Heart right ventricle (tissue), 16 donors: ENCODE measurements at regions of chr1 and their contacts with region 1.

Region 1: DNA sequence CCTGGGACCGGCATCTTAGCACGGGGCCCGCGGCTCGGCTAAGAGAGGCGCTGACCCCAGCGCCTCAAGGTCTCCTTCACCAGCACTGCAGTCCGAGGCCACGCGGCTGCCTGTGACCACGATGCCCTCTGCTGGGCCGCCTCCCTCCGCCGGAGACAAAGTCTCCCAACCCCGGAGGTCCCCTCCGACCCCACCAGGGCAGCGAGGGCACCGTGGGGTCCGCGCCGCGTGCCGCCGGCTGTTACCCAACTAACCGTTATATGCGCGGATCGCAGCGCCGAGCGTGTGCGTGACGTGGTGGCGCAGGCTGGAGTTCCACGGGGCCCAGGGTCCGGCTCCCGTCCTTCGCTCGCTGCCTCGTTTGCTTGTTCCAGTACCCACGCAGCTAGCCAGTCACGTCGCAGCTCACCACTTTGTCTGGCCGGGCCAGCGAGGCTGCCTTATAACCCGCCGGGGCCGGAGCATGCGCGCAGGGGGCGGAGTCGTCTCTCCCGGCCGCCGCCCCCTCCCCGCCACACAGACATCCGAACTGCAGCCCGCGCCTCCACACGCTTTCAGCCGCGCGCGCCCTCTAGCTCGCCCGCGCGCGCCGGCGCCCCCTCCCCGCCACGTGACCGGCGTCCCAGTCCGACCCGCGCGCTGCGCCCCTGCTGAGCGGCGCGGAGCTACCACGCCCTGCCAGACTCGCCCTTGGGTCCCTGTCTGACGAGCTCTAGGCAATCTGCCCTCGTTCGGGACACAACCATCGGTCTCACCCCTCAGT is at the start of gene SLC16A1:
- DNase-seq: peak; percentile 92 to 95
- ATAC-seq: peak; percentile 93 to 97 (median 94)
- H3K4me3 ChIP-seq: peak within 1 kb of the TSS; percentile 34 to 94 (median 77)
- H3K27ac ChIP-seq: peak within 1 kb of the TSS; percentile 85 to 96 (median 94)
- H3K4me1 ChIP-seq: peaks cover 0 to 62% (median 51%) of the 10 kb centered on the region in 9 donors
- H3K27me3 ChIP-seq: no peaks in the 10 kb centered on the region
- CTCF ChIP-seq: peak in 8 of 9 donors; percentile 8 to 59 (median 49)
- total RNA-seq, gene SLC16A1: 129 to 193 (median 152) TPM

Region 2: GRCh38 chr1:112715264-112716053 is 240.5 kb before region 1 on chr1 and contains the start of gene PPM1J:
- intact Hi-C with region 1: loop called in 3 of 10 experiments (anchors 5 to 10 kb)
- DNase-seq: peak; percentile 98 to 99
- ATAC-seq: peak; percentile 87 to 96 (median 91)
- H3K4me3 ChIP-seq: peak within 1 kb of the TSS; percentile 55 to 81 (median 71)
- H3K27ac ChIP-seq: peak within 1 kb of the TSS in 9 of 10 donors; percentile 67 to 88 (median 78)
- H3K4me1 ChIP-seq: peaks cover 2 to 35% (median 23%) of the 10 kb centered on the region in 9 donors
- H3K27me3 ChIP-seq: peaks cover 0 to 30% (median 12%) of the 10 kb centered on the region in 7 donors
- CTCF ChIP-seq: peak in 1 of 9 donors; percentile 2
- total RNA-seq, gene PPM1J: 5.8 to 11.0 (median 8.5) TPM

Region 3: DNA sequence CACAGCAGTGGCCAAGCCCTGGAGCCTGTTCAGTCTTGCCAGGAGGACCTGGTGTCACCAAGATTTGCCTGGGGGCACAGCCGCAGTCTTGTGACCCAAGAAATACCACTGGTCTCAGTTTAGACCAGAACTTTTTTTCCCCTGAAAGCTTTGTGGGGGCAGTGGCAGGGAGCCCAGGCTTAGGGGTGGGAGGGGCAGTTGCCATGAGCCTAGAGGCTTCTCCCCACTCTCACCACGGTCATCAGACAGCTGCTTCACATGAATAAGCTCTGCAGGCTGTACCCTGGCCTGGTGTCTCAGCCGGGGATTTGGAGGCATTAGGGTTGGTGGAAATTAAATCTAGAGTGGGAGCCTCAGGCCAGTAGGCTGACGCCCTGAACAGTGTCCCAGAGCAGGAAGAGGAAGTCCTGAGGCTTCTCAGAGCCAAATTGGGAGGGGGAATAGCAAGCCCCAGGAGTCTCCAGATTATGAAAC is 73.7 kb before region 1 on chr1:
- intact Hi-C with region 1: loop called in 6 of 10 experiments (anchors 1 to 5 kb)
- DNase-seq: no peak
- ATAC-seq: peak; percentile 6 to 85 (median 46)
- H3K4me3 ChIP-seq: no peak overlapping the region
- H3K27ac ChIP-seq: peak overlapping the region in 8 of 10 donors; percentile 10 to 76 (median 65)
- H3K4me1 ChIP-seq: peaks cover 0 to 23% (median 17%) of the 10 kb centered on the region in 9 donors
- H3K27me3 ChIP-seq: no peaks in the 10 kb centered on the region
- CTCF ChIP-seq: no peak

Region 4: DNA sequence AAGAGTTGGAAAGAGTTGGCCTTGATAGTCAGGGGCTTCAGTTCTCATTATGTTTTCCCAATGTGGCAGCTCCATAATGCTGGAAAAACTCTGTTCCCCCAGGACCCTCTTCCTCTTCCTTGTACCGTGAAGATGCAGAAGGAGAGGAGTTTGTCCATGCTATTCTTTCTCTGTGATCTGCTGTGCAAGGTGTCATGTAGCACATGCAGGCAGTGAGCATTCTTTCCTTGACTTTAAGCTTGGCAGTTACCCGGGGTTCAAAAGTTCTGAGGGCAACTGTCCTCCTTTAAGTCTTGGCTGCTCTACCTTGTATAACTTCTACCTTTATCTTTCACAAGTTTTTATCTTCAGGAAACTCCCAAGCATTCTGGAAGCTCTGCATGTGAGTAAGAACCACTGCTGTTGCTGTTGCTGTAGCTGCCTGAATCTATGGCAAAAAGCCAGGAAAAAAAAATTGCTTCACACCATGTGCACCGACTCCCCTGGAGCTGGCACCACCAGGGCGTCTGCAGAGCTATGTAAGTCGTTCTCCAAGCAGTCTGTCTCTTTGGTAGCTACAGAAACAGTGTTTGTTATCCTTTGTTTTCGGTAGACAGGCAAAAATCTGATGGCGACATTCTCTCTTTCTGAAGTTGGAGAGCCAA is 42.8 kb after region 1 on chr1:
- intact Hi-C with region 1: loop called in 3 of 10 experiments (anchors 5 to 10 kb)
- DNase-seq: peak; percentile 51 to 52
- ATAC-seq: peak; percentile 69 to 88 (median 83)
- H3K4me3 ChIP-seq: no peak overlapping the region
- H3K27ac ChIP-seq: peak overlapping the region; percentile 47 to 93 (median 80)
- H3K4me1 ChIP-seq: peaks cover 6 to 53% (median 16%) of the 10 kb centered on the region in 9 donors
- H3K27me3 ChIP-seq: no peaks in the 10 kb centered on the region
- CTCF ChIP-seq: no peak

Region 5: GRCh38 chr1:113021430-113022086 is 65.6 kb after region 1 on chr1:
- intact Hi-C with region 1: loop called in 5 of 10 experiments (anchors 10 kb)
- DNase-seq: no peak
- ATAC-seq: peak in 4 of 8 donors; percentile 30 to 60 (median 52)
- H3K4me3 ChIP-seq: no peak overlapping the region
- H3K27ac ChIP-seq: peak overlapping the region in 4 of 10 donors; percentile 1 to 35 (median 28)
- H3K4me1 ChIP-seq: peaks cover 0 to 7% (median 0%) of the 10 kb centered on the region in 9 donors
- H3K27me3 ChIP-seq: no peaks in the 10 kb centered on the region
- CTCF ChIP-seq: no peak

Region 6: DNA sequence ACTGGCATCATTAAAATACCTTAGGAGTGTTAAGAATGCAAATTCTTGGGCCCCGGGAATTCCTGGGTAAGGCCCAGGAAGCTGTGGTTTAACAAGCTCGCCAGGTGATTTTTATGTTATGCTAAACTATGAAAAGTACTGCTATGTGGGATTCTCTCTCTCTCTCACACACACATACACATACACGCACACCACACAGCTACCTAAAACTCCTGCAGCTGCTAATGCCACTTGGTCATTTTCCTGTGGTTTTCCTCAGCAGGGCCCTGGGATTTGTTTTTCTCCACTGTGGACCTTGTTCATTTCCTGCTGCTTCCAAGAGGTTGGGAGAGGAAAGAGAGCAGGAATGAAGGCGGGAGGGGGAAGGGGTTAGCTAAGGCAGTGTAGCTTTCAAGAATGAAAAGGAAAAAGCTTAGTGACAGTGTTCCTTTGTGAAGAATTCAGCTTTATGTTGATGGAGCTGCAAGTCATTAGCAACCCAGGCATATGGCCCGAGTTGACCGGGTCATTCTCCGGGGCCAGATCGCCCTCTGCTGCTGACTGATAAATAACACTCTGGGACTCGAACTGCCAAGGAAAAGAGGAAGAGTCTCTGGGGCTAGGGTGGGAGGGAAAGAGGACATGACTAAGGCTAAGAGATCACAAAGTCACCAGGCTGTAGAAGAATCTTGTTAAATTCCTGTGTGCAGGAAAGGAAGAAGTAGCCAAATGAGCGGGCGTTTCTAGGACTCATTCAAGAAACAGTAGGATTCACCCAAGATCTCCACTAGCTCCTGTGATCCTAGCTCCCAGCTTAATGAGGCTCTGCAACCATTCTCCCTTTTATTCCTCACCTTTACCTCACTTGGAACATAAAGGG is 86.6 kb after region 1 on chr1:
- intact Hi-C with region 1: loop called in 5 of 10 experiments (anchors 5 to 10 kb)
- DNase-seq: peak; percentile 62 to 75
- ATAC-seq: peak; percentile 76 to 94 (median 92)
- H3K4me3 ChIP-seq: no peak overlapping the region
- H3K27ac ChIP-seq: peak overlapping the region in 2 of 10 donors; percentile 3 to 31
- H3K4me1 ChIP-seq: peaks cover 0 to 39% (median 13%) of the 10 kb centered on the region in 9 donors
- H3K27me3 ChIP-seq: no peaks in the 10 kb centered on the region
- CTCF ChIP-seq: peak; percentile 29 to 77 (median 62)

Region 7: GRCh38 chr1:113133038-113133437 is 177.1 kb after region 1 on chr1:
- intact Hi-C with region 1: no loop called
- DNase-seq: no peak
- ATAC-seq: no peak
- H3K4me3 ChIP-seq: no peak overlapping the region
- H3K27ac ChIP-seq: no peak overlapping the region
- H3K4me1 ChIP-seq: peaks cover 0 to 8% (median 0%) of the 10 kb centered on the region in 9 donors
- H3K27me3 ChIP-seq: no peaks in the 10 kb centered on the region
- CTCF ChIP-seq: no peak